ENCODE measurements at regions of chr13 and their contacts with region 1.

Region 1: GRCh38 chr13:41652727-41653361 is 195.5 kb downstream of the RGCC start:
- DNase-seq: peak in 7 of 9 donors; percentile 19 to 60 (median 50)
- ATAC-seq: peak; percentile 54
- H3K4me3 ChIP-seq: no peak overlapping the region
- H3K4me3 Mint-ChIP-seq: no peak overlapping the region
- H3K27ac ChIP-seq: no peak overlapping the region
- H3K27ac Mint-ChIP-seq: peak overlapping the region in 1 of 9 donors; percentile 36
- H3K4me1 ChIP-seq: peaks cover 0 to 5% of the 10 kb centered on the region in 2 donors
- H3K4me1 Mint-ChIP-seq: peaks cover 0 to 24% (median 12%) of the 10 kb centered on the region in 7 donors
- H3K27me3 ChIP-seq: no peaks in the 10 kb centered on the region
- H3K27me3 Mint-ChIP-seq: no peaks in the 10 kb centered on the region

Region 2: DNA sequence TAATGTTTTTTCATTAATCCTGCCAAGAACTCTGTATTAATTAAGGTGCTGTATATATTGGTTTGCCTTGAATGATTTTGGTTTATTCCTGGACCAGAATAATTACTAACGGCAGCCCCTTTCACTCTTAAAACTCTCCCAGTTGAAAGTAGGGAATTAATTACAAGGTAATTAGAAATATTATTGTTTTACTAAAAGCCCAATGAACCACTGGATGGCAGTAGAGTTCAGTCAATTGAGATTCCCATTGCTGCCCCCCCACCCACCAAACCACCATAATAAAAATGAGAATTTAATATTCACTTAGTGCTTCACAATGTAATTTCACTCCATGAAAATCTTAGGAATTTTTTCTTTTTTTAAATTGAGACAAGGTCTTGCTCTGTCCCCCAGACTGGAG is 577.8 kb before region 1 on chr13:
- CTCF ChIA-PET with region 1: interaction called, 4 read pairs
- POLR2A ChIA-PET with region 1: no interaction called
- intact Hi-C with region 1: loop called in 1 of 2 experiments (anchors 1 kb)
- DNase-seq: peak in 7 of 9 donors; percentile 15 to 58 (median 51)
- ATAC-seq: peak; percentile 63
- H3K4me3 ChIP-seq: no peak overlapping the region
- H3K4me3 Mint-ChIP-seq: no peak overlapping the region
- H3K27ac ChIP-seq: no peak overlapping the region
- H3K27ac Mint-ChIP-seq: no peak overlapping the region
- H3K4me1 ChIP-seq: no peaks in the 10 kb centered on the region
- H3K4me1 Mint-ChIP-seq: no peaks in the 10 kb centered on the region
- H3K27me3 ChIP-seq: no peaks in the 10 kb centered on the region
- H3K27me3 Mint-ChIP-seq: no peaks in the 10 kb centered on the region

Region 3: GRCh38 chr13:41384755-41385503 is 267.9 kb before region 1 on chr13:
- CTCF ChIA-PET with region 1: interaction called, 6 read pairs
- POLR2A ChIA-PET with region 1: interaction called, 3 read pairs
- intact Hi-C with region 1: loop called in 1 of 2 experiments (anchors 1 kb)
- DNase-seq: no peak
- ATAC-seq: no peak
- H3K4me3 ChIP-seq: no peak overlapping the region
- H3K4me3 Mint-ChIP-seq: no peak overlapping the region
- H3K27ac ChIP-seq: no peak overlapping the region
- H3K27ac Mint-ChIP-seq: peak overlapping the region in 3 of 9 donors; percentile 10 to 60 (median 25)
- H3K4me1 ChIP-seq: peaks cover 0 to 10% of the 10 kb centered on the region in 2 donors
- H3K4me1 Mint-ChIP-seq: peaks cover 11 to 56% (median 20%) of the 10 kb centered on the region in 7 donors
- H3K27me3 ChIP-seq: no peaks in the 10 kb centered on the region
- H3K27me3 Mint-ChIP-seq: peaks cover 0 to 3% (median 0%) of the 10 kb centered on the region in 5 donors

Region 4: GRCh38 chr13:41411522-41411921 is 241.3 kb before region 1 on chr13:
- CTCF ChIA-PET with region 1: interaction called, 18 read pairs
- POLR2A ChIA-PET with region 1: interaction called, 5 read pairs
- intact Hi-C with region 1: loop called (anchors 1 to 2 kb)
- DNase-seq: peak in 6 of 9 donors; percentile 17 to 54 (median 28)
- ATAC-seq: peak; percentile 48
- H3K4me3 ChIP-seq: no peak overlapping the region
- H3K4me3 Mint-ChIP-seq: no peak overlapping the region
- H3K27ac ChIP-seq: no peak overlapping the region
- H3K27ac Mint-ChIP-seq: peak overlapping the region in 2 of 9 donors; percentile 36 to 66
- H3K4me1 ChIP-seq: no peaks in the 10 kb centered on the region
- H3K4me1 Mint-ChIP-seq: peaks cover 0 to 4% (median 0%) of the 10 kb centered on the region in 7 donors
- H3K27me3 ChIP-seq: no peaks in the 10 kb centered on the region
- H3K27me3 Mint-ChIP-seq: peaks cover 0 to 13% (median 0%) of the 10 kb centered on the region in 5 donors

Region 5: GRCh38 chr13:41428155-41428554 is 224.7 kb before region 1 on chr13:
- CTCF ChIA-PET with region 1: interaction called, 5 read pairs
- POLR2A ChIA-PET with region 1: no interaction called
- intact Hi-C with region 1: loop called in 1 of 2 experiments (anchors 1 kb)
- DNase-seq: peak; percentile 14 to 55 (median 38)
- ATAC-seq: peak; percentile 93
- H3K4me3 ChIP-seq: no peak overlapping the region
- H3K4me3 Mint-ChIP-seq: peak overlapping the region; percentile 13 to 86 (median 62)
- H3K27ac ChIP-seq: no peak overlapping the region
- H3K27ac Mint-ChIP-seq: peak overlapping the region in 2 of 9 donors; percentile 64 to 84
- H3K4me1 ChIP-seq: peaks cover 0 to 6% of the 10 kb centered on the region in 2 donors
- H3K4me1 Mint-ChIP-seq: peaks cover 4 to 15% (median 11%) of the 10 kb centered on the region in 7 donors
- H3K27me3 ChIP-seq: no peaks in the 10 kb centered on the region
- H3K27me3 Mint-ChIP-seq: peaks cover 0 to 7% (median 6%) of the 10 kb centered on the region in 5 donors

Region 6: GRCh38 chr13:41502673-41503072 is 150.2 kb before region 1 on chr13:
- CTCF ChIA-PET with region 1: no interaction called
- POLR2A ChIA-PET with region 1: no interaction called
- intact Hi-C with region 1: loop called in 1 of 2 experiments (anchors 2 kb)
- DNase-seq: peak in 7 of 9 donors; percentile 34 to 63 (median 56)
- ATAC-seq: peak; percentile 72
- H3K4me3 ChIP-seq: no peak overlapping the region
- H3K4me3 Mint-ChIP-seq: peak overlapping the region in 8 of 10 donors; percentile 35 to 68 (median 51)
- H3K27ac ChIP-seq: peak overlapping the region; percentile 22
- H3K27ac Mint-ChIP-seq: peak overlapping the region; percentile 34 to 96 (median 91)
- H3K4me1 ChIP-seq: peaks cover 32 to 43% of the 10 kb centered on the region in 2 donors
- H3K4me1 Mint-ChIP-seq: peaks cover 41 to 63% (median 55%) of the 10 kb centered on the region in 7 donors
- H3K27me3 ChIP-seq: no peaks in the 10 kb centered on the region
- H3K27me3 Mint-ChIP-seq: no peaks in the 10 kb centered on the region

Measured in naive thymus-derived CD4-positive, alpha-beta T cell (primary cell).